H1 (cell line): ENCODE measurements at regions of chr7 and their contacts with region 1.

Region 1: GRCh38 chr7:29408841-29409243 is 154.8 kb upstream of the PRR15 start:
- DNase-seq: peak; percentile 15 to 72
- H3K4me3 ChIP-seq: no peak overlapping the region
- H3K27ac ChIP-seq: no peak overlapping the region
- H3K4me1 ChIP-seq: peaks cover 2 to 11% (median 6%) of the 10 kb centered on the region in 4 experiments; a peak in 4 of 7 replicates
- H3K27me3 ChIP-seq: no peaks in the 10 kb centered on the region
- CTCF ChIP-seq: peak in 2 of 3 experiments; percentile 75 to 87; a peak in 3 of 4 replicates
- EP300 ChIP-seq: no peak
- POLR2A ChIP-seq: no peak
- RAD21 ChIP-seq: peak; percentile 96 to 98

Region 2: GRCh38 chr7:28926871-28927597 is 481.8 kb before region 1 on chr7:
- CTCF ChIA-PET with region 1: interaction called, 155 read pairs
- POLR2A ChIA-PET with region 1: interaction called, 3 read pairs
- DNase-seq: peak in 1 of 2 experiments; percentile 66
- H3K4me3 ChIP-seq: peak overlapping the region; percentile 24 to 62 (median 40); a peak in 6 of 8 replicates
- H3K27ac ChIP-seq: no peak overlapping the region
- H3K4me1 ChIP-seq: peaks cover 0 to 8% (median 1%) of the 10 kb centered on the region in 4 experiments; a peak in 3 of 7 replicates
- H3K27me3 ChIP-seq: no peaks in the 10 kb centered on the region
- CTCF ChIP-seq: peak in 2 of 3 experiments; percentile 69 to 81; a peak in 3 of 4 replicates
- EP300 ChIP-seq: no peak
- POLR2A ChIP-seq: 0 out of 3 replicates have a peak, but pooled peaks of 1 of the 2 experiments have one; percentile 44
- RAD21 ChIP-seq: peak; percentile 74 to 79

Region 3: GRCh38 chr7:29099891-29100847 is 308.7 kb before region 1 on chr7:
- CTCF ChIA-PET with region 1: interaction called, 10 read pairs
- POLR2A ChIA-PET with region 1: no interaction called
- DNase-seq: no peak
- H3K4me3 ChIP-seq: no peak overlapping the region
- H3K27ac ChIP-seq: no peak overlapping the region
- H3K4me1 ChIP-seq: no peaks in the 10 kb centered on the region
- H3K27me3 ChIP-seq: no peaks in the 10 kb centered on the region
- CTCF ChIP-seq: no peak
- EP300 ChIP-seq: no peak
- POLR2A ChIP-seq: no peak
- RAD21 ChIP-seq: no peak

Region 4: DNA sequence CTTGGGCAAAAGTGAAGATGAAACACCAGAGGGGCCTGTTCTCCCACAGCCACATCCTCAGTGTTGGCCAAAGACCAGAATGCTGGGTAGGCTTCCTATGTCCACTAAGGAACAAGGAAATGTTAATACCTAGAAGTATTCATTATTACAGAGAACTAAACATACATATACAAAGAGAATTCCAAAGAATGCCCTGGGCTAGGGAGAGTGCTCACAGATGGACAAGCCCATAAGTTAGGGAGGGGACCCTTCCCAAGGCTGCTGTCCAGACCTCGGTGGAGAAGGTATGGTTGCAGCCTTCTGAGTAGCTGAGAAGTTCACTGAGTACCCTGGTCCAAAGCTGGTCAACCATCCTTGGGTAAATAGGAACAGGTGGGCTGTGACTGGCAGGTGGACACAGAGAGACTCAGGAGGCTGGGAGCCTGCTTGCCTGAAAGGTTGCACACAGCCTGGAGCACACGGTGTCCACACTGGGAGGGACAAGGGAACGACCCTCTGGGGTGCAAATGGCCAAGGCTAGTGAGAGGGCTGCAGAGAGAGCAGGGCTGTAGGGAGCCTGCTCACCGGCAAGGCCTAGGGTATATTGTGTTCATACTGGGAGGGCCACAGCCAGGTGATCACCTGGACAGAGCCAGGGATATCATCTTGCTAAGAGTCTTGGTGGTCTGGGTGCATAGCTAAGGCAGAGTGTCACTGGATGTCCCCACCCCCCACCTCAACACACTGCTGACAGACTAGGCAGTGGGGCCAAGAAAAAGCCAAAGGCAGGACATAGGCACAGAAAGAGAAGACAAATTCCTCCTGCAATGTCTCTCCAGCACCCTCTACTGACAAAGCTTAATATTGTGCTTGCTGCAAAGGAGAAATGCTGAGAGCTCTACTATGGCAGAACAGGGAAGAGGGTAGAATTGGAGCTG is 302.8 kb before region 1 on chr7:
- CTCF ChIA-PET with region 1: interaction called, 19 read pairs
- POLR2A ChIA-PET with region 1: no interaction called
- DNase-seq: peak in 1 of 2 experiments; percentile 21
- H3K4me3 ChIP-seq: no peak overlapping the region
- H3K27ac ChIP-seq: no peak overlapping the region
- H3K4me1 ChIP-seq: no peaks in the 10 kb centered on the region
- H3K27me3 ChIP-seq: no peaks in the 10 kb centered on the region
- CTCF ChIP-seq: peak in 2 of 3 experiments; percentile 89 to 90; a peak in 3 of 4 replicates
- EP300 ChIP-seq: no peak
- POLR2A ChIP-seq: no peak
- RAD21 ChIP-seq: peak; percentile 94 to 95

Region 5: GRCh38 chr7:29113384-29114103 is 295.3 kb before region 1 on chr7:
- CTCF ChIA-PET with region 1: interaction called, 38 read pairs
- POLR2A ChIA-PET with region 1: no interaction called
- DNase-seq: peak in 1 of 2 experiments; percentile 27
- H3K4me3 ChIP-seq: no peak overlapping the region
- H3K27ac ChIP-seq: no peak overlapping the region
- H3K4me1 ChIP-seq: peaks cover 2 to 3% (median 3%) of the 10 kb centered on the region in 4 experiments; a peak in 4 of 7 replicates
- H3K27me3 ChIP-seq: no peaks in the 10 kb centered on the region
- CTCF ChIP-seq: peak; percentile 21 to 76 (median 67)
- EP300 ChIP-seq: no peak
- POLR2A ChIP-seq: no peak
- RAD21 ChIP-seq: peak; percentile 80 to 83

Region 6: GRCh38 chr7:29119538-29120199 is 289.2 kb before region 1 on chr7:
- CTCF ChIA-PET with region 1: interaction called, 38 read pairs
- POLR2A ChIA-PET with region 1: no interaction called
- DNase-seq: no peak
- H3K4me3 ChIP-seq: no peak overlapping the region
- H3K27ac ChIP-seq: no peak overlapping the region
- H3K4me1 ChIP-seq: peaks cover 0 to 3% (median under 1%) of the 10 kb centered on the region in 4 experiments; a peak in 2 of 7 replicates
- H3K27me3 ChIP-seq: no peaks in the 10 kb centered on the region
- CTCF ChIP-seq: no peak
- EP300 ChIP-seq: no peak
- POLR2A ChIP-seq: no peak
- RAD21 ChIP-seq: no peak

Region 7: GRCh38 chr7:29345600-29345999 is 63.2 kb before region 1 on chr7:
- CTCF ChIA-PET with region 1: interaction called, 10 read pairs
- POLR2A ChIA-PET with region 1: no interaction called
- DNase-seq: peak; percentile 44 to 66
- H3K4me3 ChIP-seq: no peak overlapping the region
- H3K27ac ChIP-seq: no peak overlapping the region
- H3K4me1 ChIP-seq: no peaks in the 10 kb centered on the region; a peak in 1 of 7 replicates
- H3K27me3 ChIP-seq: no peaks in the 10 kb centered on the region
- CTCF ChIP-seq: peak; percentile 64 to 83 (median 77)
- EP300 ChIP-seq: no peak
- POLR2A ChIP-seq: no peak
- RAD21 ChIP-seq: peak; percentile 90 to 92

Region 8: GRCh38 chr7:29370531-29371314 is 38.1 kb before region 1 on chr7:
- CTCF ChIA-PET with region 1: no interaction called
- POLR2A ChIA-PET with region 1: no interaction called
- DNase-seq: no peak
- H3K4me3 ChIP-seq: no peak overlapping the region
- H3K27ac ChIP-seq: no peak overlapping the region
- H3K4me1 ChIP-seq: peaks cover 0 to 4% (median 2%) of the 10 kb centered on the region in 4 experiments; a peak in 1 of 7 replicates
- H3K27me3 ChIP-seq: no peaks in the 10 kb centered on the region
- CTCF ChIP-seq: no peak
- EP300 ChIP-seq: no peak
- POLR2A ChIP-seq: no peak
- RAD21 ChIP-seq: no peak

Region 9: DNA sequence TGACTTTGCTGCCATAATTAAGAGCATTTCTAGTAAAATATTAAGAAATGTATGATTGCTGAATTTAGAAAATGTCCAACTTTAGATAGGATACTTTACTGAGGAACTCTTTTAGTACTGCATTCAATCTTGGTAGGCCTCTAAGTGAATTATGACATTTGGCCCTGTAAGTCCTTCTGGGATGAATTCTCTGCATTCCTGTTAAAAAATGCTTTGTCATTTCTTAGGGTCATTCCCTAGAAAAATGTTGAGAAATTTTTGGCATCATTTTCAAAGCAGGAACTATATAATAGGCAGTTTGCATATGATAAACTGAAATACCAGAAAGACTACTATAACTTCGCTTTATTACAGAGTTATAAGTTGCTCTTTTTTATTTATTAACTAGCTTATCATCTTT is 85.5 kb after region 1 on chr7:
- CTCF ChIA-PET with region 1: no interaction called
- POLR2A ChIA-PET with region 1: no interaction called
- DNase-seq: no peak
- H3K4me3 ChIP-seq: no peak overlapping the region
- H3K27ac ChIP-seq: no peak overlapping the region
- H3K4me1 ChIP-seq: peaks cover 2 to 11% (median 9%) of the 10 kb centered on the region in 4 experiments; a peak in 5 of 7 replicates
- H3K27me3 ChIP-seq: no peaks in the 10 kb centered on the region; a peak in 1 of 7 replicates
- CTCF ChIP-seq: no peak
- EP300 ChIP-seq: no peak
- POLR2A ChIP-seq: no peak
- RAD21 ChIP-seq: no peak